Activated CD8-positive, alpha-beta memory T cell treated with anti-CD3 and anti-CD28 coated beads, Interleukin-2, amount 10 ng/mL, durations not matched to agents 7 days and 5 days (primary cell): ENCODE measurements at regions of chr6 and their contacts with region 1.

Region 1: DNA sequence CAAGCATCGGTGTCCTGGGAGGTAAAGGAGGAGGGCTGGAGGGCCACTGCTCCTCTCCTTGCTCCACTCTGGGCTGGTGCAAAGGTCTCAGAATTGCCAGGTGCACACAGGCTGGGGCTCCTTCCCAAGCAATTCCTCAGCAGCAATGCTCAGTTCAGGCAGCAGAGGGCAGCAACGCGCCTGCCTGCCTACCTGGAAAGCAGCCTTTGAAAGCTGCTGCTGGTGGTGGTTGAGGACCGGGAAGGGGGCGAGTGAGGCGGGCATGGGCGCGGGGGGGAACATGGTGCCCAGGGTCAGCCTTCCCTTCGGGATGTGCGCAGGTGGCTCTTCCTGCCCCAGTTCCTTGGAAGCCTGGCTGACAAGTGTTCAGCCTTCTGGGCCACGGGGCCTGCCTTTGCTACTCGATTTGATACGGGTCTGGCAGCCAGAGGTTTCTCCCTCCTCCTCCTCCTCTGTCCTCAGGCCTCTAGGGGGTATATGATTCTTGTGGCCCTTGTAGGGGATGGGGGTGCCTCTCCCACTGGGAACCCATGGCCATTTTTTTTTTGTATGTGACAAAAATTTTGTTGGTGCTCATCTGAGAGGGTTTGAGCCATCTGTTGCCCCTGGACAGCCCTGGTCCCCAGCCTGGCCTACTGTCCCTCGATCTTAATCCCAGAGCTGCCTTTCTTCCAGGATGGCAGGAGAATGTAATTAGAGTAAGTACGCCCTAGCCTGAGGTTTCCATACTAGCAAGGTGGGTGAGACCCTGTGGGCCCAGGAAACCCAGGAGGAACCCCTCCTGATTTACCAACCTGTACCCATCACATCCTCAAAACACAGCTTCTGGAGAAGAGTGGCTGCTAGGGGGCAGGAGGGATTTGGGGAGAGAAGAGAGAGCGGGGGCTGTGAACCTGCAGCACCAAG is 20.1 kb downstream of the MRPS18A start:
- DNase-seq: peak; percentile 86
- ATAC-seq: peak; percentile 75
- H3K4me3 Mint-ChIP-seq: no peak overlapping the region
- H3K27ac Mint-ChIP-seq: peak overlapping the region; percentile 24
- H3K4me1 Mint-ChIP-seq: peaks cover 38% of the 10 kb centered on the region
- H3K27me3 Mint-ChIP-seq: peaks cover 11% of the 10 kb centered on the region

Region 2: DNA sequence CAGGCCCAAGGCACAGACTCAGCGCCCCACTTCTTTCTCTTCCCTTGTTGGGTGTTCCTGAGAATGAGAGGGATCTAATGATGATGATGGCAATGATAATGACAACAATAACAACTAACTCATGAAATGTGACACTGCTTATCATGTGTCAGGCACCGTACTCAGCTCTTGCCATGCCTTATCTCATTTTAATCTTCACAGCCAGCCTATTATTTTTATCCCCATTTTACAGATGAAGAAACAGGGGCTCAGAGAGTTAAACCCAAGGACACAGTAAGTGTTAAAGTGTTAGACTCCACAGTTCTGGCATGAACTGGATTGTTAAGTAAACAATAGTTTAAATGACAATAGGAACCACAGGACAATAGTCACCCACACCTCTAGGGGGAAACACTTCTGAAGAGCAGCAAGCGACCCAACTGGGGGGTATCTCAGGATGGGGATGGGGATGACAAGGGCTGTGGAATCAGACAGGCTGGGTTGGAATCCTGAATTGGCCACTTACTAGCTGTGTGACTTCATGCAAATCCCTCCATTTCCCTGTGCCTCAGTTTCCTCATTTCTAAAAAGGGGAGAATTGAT is 10.2 kb before region 1 on chr6:
- CTCF ChIA-PET with region 1: interaction called, 15 read pairs
- DNase-seq: no peak
- ATAC-seq: no peak
- H3K4me3 Mint-ChIP-seq: no peak overlapping the region
- H3K27ac Mint-ChIP-seq: no peak overlapping the region
- H3K4me1 Mint-ChIP-seq: peaks cover 9% of the 10 kb centered on the region
- H3K27me3 Mint-ChIP-seq: peaks cover 16% of the 10 kb centered on the region

Region 3: GRCh38 chr6:43687437-43688347 is 20.2 kb after region 1 on chr6 and contains the start of gene MRPS18A:
- CTCF ChIA-PET with region 1: interaction called, 10 read pairs
- DNase-seq: peak; percentile 90
- ATAC-seq: peak; percentile 98
- H3K4me3 Mint-ChIP-seq: peak within 1 kb of the TSS; percentile 89
- H3K27ac Mint-ChIP-seq: peak within 1 kb of the TSS; percentile 92
- H3K4me1 Mint-ChIP-seq: peaks cover 36% of the 10 kb centered on the region
- H3K27me3 Mint-ChIP-seq: no peaks in the 10 kb centered on the region
- total RNA-seq, gene MRPS18A: 41.0 to 47.4 TPM

Region 4: GRCh38 chr6:43733471-43734293 is 66.2 kb after region 1 on chr6:
- CTCF ChIA-PET with region 1: no interaction called
- DNase-seq: peak; percentile 58
- ATAC-seq: peak; percentile 39
- H3K4me3 Mint-ChIP-seq: no peak overlapping the region
- H3K27ac Mint-ChIP-seq: peak overlapping the region; percentile 46
- H3K4me1 Mint-ChIP-seq: peaks cover 10% of the 10 kb centered on the region
- H3K27me3 Mint-ChIP-seq: peaks cover 4% of the 10 kb centered on the region

Region 5: GRCh38 chr6:43758617-43759050 is 91.1 kb after region 1 on chr6:
- CTCF ChIA-PET with region 1: interaction called, 13 read pairs
- DNase-seq: no peak
- ATAC-seq: peak; percentile 59
- H3K4me3 Mint-ChIP-seq: no peak overlapping the region
- H3K27ac Mint-ChIP-seq: no peak overlapping the region
- H3K4me1 Mint-ChIP-seq: peaks cover 6% of the 10 kb centered on the region
- H3K27me3 Mint-ChIP-seq: peaks cover 9% of the 10 kb centered on the region

Region 6: DNA sequence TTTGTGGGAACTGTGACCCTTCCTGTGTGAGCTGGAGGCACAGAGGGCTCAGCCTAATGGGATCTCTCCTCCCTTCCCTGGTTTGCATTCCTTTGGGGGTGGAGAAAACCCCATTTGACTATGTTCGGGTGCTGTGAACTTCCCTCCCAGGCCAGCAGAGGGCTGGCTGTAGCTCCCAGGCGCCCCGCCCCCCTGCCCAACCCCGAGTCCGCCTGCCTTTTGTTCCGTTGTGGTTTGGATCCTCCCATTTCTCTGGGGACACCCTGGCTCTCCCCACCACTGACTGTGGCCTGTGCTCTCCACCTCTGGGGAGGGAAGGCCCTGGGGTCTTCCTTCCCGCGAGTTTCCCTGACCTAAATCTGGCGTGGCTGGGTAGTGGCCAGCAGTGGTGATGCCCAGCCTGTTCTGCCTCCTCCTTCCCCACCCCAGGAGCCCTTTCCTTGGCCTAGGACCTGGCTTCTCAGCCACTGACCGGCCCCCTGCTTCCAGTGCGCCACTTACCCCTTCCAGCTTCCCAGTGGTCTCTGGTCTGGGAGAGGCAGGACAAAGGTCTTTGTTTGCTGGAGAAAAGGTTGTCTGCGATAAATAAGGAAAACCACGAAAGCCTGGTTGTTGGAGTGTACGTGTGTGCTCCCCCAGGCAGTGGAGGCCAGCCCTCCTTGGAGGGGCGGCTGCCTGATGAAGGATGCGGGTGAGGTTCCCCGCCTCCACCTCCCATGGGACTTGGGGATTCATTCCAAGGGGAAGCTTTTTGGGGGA is 107.5 kb after region 1 on chr6:
- CTCF ChIA-PET with region 1: interaction called, 52 read pairs
- DNase-seq: peak; percentile 75
- ATAC-seq: no peak
- H3K4me3 Mint-ChIP-seq: no peak overlapping the region
- H3K27ac Mint-ChIP-seq: no peak overlapping the region
- H3K4me1 Mint-ChIP-seq: peaks cover 36% of the 10 kb centered on the region
- H3K27me3 Mint-ChIP-seq: no peaks in the 10 kb centered on the region